PC-9 (cell line): ENCODE measurements at regions of chr3 and their contacts with region 1.

Region 1: GRCh38 chr3:185709251-185709951 is 115.4 kb downstream of the IGF2BP2 start:
- DNase-seq: no peak
- H3K4me3 ChIP-seq: no peak overlapping the region
- H3K27ac ChIP-seq: no peak overlapping the region
- H3K4me1 ChIP-seq: no peaks in the 10 kb centered on the region
- H3K27me3 ChIP-seq: no peaks in the 10 kb centered on the region
- CTCF ChIP-seq: no peak

Region 2: GRCh38 chr3:185656321-185656840 is 53.0 kb before region 1 on chr3:
- CTCF ChIA-PET with region 1: no interaction called
- POLR2A ChIA-PET with region 1: no interaction called
- intact Hi-C with region 1: no loop called
- DNase-seq: no peak
- H3K4me3 ChIP-seq: no peak overlapping the region
- H3K27ac ChIP-seq: no peak overlapping the region
- H3K4me1 ChIP-seq: peaks cover 17% of the 10 kb centered on the region
- H3K27me3 ChIP-seq: no peaks in the 10 kb centered on the region
- CTCF ChIP-seq: no peak

Region 3: DNA sequence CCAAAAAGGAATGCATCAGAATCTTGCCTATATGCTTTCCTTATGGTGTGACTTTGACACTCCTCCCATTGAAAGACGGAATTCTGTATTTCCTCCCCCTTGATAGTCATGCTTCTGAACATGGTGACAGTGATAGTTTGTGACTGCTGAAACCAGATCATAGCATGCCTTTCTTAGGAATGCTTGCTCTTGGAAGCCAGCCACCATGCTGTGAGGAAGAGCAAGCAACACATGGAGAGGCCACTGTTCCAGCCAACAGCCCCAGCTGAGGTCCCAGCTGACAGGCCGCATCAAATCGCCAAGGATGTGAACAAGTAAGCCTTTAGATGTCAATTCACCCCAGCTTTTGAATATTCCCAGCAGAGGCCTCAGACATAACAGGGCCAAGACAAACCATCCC is 15.4 kb after region 1 on chr3:
- CTCF ChIA-PET with region 1: no interaction called
- POLR2A ChIA-PET with region 1: no interaction called
- intact Hi-C with region 1: loop called (anchors 2 kb)
- DNase-seq: no peak
- H3K4me3 ChIP-seq: no peak overlapping the region
- H3K27ac ChIP-seq: no peak overlapping the region
- H3K4me1 ChIP-seq: peaks cover 33% of the 10 kb centered on the region
- H3K27me3 ChIP-seq: no peaks in the 10 kb centered on the region
- CTCF ChIP-seq: no peak